Sciatic nerve (tissue), 2 donors: ENCODE measurements at regions of chr2 and their contacts with region 1.

Region 1: GRCh38 chr2:184187421-184187971 is 410.8 kb upstream of the ZNF804A start:
- DNase-seq: no peak
- ATAC-seq: no peak

Region 2: GRCh38 chr2:183773775-183774174 is 413.7 kb before region 1 on chr2:
- intact Hi-C with region 1: loop called (anchors 5 kb)
- DNase-seq: no peak
- ATAC-seq: no peak

Region 3: DNA sequence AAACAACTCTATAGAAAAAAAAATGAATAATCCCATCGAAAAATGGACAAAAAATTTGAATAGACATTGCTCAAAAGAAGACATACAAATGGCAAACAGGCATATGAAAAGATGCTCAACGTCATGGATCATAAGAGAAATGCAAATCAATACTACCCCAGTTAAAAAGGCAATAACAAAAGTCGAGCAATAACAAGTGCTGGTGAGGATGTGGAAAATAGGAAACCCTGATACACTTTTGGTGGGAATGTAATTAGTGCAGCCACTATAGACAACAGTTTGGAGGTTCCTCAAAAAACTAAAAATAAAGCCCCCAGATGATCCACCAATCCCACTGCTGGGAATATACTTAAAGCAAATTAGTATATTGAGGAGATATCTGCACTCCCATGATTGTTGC is 361.8 kb before region 1 on chr2:
- intact Hi-C with region 1: no loop called
- DNase-seq: no peak
- ATAC-seq: no peak

Region 4: GRCh38 chr2:184031402-184032147 is 155.9 kb before region 1 on chr2:
- intact Hi-C with region 1: no loop called
- DNase-seq: no peak
- ATAC-seq: no peak